OCI-LY7 (cell line): ENCODE measurements at regions of chr4 and their contacts with region 1.

Region 1: DNA sequence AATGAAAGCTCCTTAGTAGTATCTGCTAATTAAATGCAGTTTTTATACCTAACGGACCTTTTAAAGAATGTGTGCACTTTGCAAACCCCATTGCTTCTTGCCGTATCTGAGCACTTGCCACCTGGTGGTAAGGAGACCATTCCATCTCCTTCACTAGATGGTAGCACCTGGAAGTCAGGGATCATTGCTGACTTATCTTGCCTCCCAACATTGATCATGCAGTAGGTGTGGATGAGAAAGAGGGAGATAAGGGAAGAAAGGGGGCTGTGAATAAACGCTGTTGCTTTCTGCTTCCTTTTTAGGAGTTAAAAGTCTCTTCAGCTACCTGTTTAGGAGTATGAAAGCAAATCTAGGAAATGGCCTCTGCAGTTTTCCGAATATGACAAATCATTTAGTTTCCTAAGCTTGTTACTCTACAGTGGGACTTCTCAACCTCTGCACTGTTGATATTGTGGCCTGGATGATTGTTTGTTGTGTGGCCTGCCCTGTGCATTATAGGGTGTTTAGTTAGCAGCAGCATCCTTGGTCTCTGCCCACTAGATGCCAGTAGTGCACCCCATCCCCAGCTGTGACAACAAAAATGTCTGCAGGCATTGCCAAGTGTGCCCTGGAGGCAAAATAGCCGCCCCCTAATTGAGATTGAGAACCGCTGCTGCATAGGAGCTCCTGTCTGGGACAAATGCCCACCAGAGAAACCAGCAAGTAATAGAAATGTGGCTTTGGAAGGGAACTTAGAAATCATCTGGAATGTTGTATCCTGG is 38.8 kb downstream of the GAB1 start:
- DNase-seq: peak; percentile 86
- H3K4me3 ChIP-seq: peak overlapping the region; percentile 23
- H3K27ac ChIP-seq: peak overlapping the region; percentile 92
- H3K4me1 ChIP-seq: peaks cover 87% of the 10 kb centered on the region
- CTCF ChIP-seq: peak; percentile 92

Region 2: DNA sequence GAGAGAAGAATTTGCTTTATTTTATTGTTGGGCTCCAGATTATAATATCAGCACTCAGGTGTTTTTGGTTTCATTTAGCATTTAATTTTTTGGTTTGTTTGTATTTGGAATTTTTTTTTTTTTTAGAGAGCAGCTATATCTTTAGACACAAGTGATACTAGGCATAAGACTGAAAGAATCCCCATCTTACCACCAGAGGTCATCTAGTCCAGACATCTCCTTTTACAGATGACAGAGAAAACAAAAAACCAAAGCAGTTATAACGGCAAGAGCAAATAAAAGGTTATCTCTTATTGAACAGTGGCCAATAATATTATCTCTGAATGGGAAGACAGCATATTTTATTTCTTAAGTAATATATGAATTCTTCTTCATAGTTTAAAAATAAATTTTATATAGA is 167.9 kb before region 1 on chr4:
- CTCF ChIA-PET with region 1: no interaction called
- POLR2A ChIA-PET with region 1: interaction called, 3 read pairs
- intact Hi-C with region 1: loop called (anchors 5 kb)
- DNase-seq: peak; percentile 29
- H3K4me3 ChIP-seq: no peak overlapping the region
- H3K27ac ChIP-seq: no peak overlapping the region
- H3K4me1 ChIP-seq: no peaks in the 10 kb centered on the region
- CTCF ChIP-seq: peak; percentile 61

Region 3: DNA sequence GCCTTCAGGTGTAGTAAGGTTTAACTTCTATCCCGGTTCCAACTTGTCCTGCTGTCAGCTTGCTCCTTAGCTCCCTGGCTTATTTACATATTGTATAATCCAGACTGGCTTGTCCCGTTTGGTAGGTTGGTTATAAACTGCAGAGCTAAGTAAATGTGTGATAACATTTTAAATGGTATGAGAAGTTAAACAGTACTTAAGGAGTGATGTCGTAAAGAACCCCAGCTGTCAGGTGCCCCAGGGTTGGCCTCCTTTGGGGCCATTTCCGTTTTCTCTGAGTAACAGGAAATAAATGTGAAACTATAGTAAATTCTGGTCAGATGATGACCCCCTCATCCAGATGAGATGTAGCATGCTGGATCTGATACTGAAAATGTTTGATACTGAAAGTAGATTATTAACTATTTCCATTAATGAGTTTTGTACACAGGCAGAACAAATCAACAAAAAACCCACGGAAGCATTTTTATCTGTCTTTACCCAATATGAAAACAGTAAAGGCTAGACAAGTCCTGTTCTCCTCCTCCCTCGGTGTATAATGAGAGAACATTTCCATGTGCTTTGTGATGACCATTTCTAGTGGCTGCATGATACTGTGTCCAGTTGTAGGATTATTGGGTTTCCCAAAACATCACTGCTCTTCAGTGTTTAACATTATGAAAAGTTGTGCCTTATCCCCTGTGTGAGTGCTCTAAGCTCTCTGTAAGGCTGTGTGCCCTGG is 16.4 kb before region 1 on chr4:
- CTCF ChIA-PET with region 1: interaction called, 8 read pairs
- POLR2A ChIA-PET with region 1: interaction called, 186 read pairs
- intact Hi-C with region 1: loop called (anchors 2 kb)
- DNase-seq: peak; percentile 91
- H3K4me3 ChIP-seq: peak overlapping the region; percentile 61
- H3K27ac ChIP-seq: peak overlapping the region; percentile 98
- H3K4me1 ChIP-seq: peaks cover 96% of the 10 kb centered on the region
- CTCF ChIP-seq: no peak

Region 4: DNA sequence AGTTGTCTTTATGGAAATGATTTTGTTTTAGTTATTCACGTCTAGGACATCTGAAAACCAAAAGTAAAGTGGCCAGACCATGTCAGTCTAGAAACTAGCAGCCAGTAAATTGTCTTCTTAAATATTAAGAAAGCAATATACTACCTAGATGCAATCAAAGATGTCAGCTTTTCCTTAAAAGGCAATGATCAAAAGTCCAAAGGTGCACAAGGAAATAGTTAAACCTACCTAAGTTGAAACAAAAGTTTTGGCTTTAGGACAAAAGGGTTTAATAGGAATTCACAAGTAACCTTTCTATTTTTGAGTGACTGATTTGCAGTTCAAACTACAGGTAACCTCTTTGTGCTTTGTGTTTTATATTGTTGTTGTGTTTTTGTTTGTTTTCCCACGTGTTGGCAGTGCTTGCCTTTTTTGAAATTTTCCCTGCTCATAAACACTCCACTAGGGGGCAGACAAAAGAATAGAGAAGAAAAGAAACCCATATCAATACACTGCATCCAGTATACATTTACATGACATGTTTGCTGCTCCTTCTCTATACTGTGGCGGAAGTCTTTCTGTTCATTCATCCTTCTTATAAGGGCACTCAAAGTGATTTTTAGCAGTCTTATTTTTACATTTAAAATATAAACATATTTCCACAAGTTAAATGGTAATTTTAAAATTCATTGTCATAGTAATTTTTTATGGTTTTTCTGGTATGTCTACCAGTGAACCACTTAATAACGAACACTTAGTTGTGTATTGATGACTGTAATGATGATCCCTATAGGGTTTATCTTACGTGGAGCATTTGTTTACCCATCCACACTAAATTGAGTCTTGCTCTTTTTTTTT is 23.8 kb after region 1 on chr4:
- CTCF ChIA-PET with region 1: interaction called, 3 read pairs
- POLR2A ChIA-PET with region 1: interaction called, 364 read pairs
- intact Hi-C with region 1: loop called (anchors 1 kb)
- DNase-seq: peak; percentile 72
- H3K4me3 ChIP-seq: peak overlapping the region; percentile 12
- H3K27ac ChIP-seq: peak overlapping the region; percentile 97
- H3K4me1 ChIP-seq: peaks cover 99% of the 10 kb centered on the region
- CTCF ChIP-seq: peak; percentile 97

Region 5: DNA sequence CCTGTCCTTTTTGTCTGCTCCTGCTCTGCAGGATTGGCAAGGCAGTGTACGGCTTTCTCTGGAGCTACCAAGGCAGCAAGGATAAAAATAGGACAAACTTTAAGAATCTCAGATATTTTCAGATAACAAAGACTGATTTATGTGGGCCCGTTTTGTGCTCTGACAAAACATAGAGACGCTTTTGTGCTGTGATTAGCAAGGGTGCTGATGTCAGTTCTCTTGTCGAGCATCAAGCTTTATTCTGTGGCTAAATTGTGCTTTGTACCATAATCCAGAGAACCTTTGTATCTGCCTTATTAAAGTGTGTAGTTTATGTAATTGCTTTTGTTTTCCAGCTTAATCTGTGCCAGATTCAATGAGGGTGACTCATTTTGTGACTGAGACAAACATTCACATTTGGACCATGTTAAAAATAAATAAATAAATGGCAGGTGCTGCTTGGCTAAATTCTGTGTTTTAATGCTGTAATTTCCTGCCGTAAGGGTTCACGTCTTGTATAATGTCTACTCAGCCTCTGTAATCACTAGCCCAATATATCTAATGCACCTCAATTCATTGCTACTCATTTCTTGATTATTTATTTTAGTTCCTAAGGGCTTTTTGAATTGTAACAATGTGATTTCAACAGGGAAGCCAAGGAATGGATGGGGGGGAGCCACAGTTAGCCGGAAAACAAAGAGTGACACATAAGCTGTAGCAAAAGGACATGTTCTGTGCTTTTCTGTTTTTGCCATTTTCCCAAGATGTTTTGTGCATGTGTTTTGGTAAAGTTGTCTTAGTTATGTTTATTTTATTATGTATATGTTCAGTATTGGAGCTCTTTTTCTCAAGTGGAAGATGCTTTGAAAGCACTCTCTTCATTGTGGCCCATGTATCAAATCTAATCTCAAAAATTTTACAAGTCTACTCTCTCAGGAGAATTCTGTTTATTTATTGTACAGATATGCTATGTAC is 36.3 kb after region 1 on chr4:
- CTCF ChIA-PET with region 1: interaction called, 3 read pairs
- POLR2A ChIA-PET with region 1: interaction called, 75 read pairs
- intact Hi-C with region 1: no loop called
- DNase-seq: peak; percentile 39
- H3K4me3 ChIP-seq: peak overlapping the region; percentile 15
- H3K27ac ChIP-seq: peak overlapping the region; percentile 97
- H3K4me1 ChIP-seq: peaks cover 85% of the 10 kb centered on the region
- CTCF ChIP-seq: no peak

Region 6: DNA sequence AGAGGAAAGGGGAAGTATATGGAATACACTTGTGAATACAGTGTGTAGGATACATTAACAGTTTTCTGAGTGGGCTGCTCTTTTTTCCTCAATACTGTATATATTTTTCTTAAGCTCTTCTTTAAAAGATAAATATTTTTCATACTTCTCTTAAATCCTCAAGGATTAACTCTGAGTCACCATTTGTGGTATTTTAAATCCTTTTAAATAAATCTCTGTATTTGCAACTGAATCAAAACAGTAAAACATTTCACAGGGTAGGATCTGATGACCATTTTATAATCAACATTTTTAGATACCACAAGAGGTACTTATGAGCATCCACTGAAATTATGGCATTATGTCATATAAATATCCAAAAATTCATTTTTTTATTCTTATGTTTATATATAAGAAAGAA is 48.8 kb after region 1 on chr4:
- CTCF ChIA-PET with region 1: interaction called, 6 read pairs
- POLR2A ChIA-PET with region 1: interaction called, 75 read pairs
- intact Hi-C with region 1: loop called (anchors 2 kb)
- DNase-seq: no peak
- H3K4me3 ChIP-seq: no peak overlapping the region
- H3K27ac ChIP-seq: peak overlapping the region; percentile 55
- H3K4me1 ChIP-seq: peaks cover 71% of the 10 kb centered on the region
- CTCF ChIP-seq: no peak

Region 7: GRCh38 chr4:143513306-143514168 is 138.0 kb after region 1 on chr4 and contains the start of gene SMARCA5:
- CTCF ChIA-PET with region 1: no interaction called
- POLR2A ChIA-PET with region 1: interaction called, 8 read pairs
- intact Hi-C with region 1: loop called (anchors 1 kb)
- DNase-seq: peak; percentile 98
- H3K4me3 ChIP-seq: peak within 1 kb of the TSS; percentile 96
- H3K27ac ChIP-seq: peak within 1 kb of the TSS; percentile 81
- H3K4me1 ChIP-seq: peaks cover 36% of the 10 kb centered on the region
- CTCF ChIP-seq: no peak
- total RNA-seq, gene SMARCA5: 52.4 and 63.4 TPM in 2 replicates